Ovary (tissue), 10 donors: ENCODE measurements at regions of chr5 and their contacts with region 1.

Region 1: GRCh38 chr5:7754992-7755596 is 95.8 kb downstream of the CFAP90 start:
- DNase-seq: peak; percentile 28 to 71 (median 62)
- H3K4me3 ChIP-seq: no peak overlapping the region
- H3K27ac ChIP-seq: no peak overlapping the region
- H3K4me1 ChIP-seq: no peaks in the 10 kb centered on the region
- H3K27me3 ChIP-seq: no peaks in the 10 kb centered on the region
- CTCF ChIP-seq: peak; percentile 27 to 47 (median 41)
- EP300 ChIP-seq: no peak
- POLR2A ChIP-seq: no peak

Region 2: DNA sequence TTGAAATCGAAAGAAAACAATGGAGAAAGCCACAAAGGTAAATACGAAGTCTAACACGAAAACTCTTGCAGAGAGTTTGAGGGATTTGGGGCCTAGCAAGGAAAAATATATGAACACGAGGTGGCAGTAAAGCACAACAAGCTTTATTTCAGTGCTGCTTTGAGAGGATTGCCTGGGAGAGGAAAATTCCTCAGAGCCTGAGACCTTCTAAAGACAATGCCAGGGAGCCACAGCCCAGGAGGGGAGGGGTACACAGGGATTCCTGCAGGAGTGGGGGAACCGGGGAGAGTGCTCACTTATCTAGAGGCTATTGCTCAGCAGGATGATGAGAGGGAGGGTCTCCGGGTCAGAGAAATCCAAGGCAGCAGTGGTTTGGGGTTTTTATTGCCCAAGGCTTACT is 494.0 kb before region 1 on chr5:
- intact Hi-C with region 1: loop called in 1 of 4 experiments (anchors 10 kb)
- DNase-seq: no peak
- H3K4me3 ChIP-seq: no peak overlapping the region
- H3K27ac ChIP-seq: no peak overlapping the region
- H3K4me1 ChIP-seq: no peaks in the 10 kb centered on the region
- H3K27me3 ChIP-seq: no peaks in the 10 kb centered on the region
- CTCF ChIP-seq: no peak
- EP300 ChIP-seq: no peak
- POLR2A ChIP-seq: no peak

Region 3: DNA sequence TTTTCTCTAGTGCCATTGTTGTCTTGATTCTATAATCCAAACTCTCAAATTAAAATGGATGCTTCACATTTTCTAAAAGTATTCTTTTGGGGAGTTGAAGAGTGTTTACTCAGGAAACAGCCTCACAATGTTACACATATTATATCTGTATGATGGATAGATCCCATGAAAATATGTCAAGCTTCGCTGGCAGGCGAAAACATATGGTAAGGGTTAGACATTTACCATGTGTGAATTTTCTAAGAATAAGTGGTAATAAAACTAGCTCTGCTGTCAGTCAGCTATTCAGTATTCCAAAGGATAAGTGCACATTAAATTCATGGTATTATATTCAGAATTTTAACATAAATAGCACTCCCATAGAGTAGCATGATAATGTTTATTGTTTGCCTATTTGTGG is 372.5 kb before region 1 on chr5:
- intact Hi-C with region 1: loop called in 1 of 4 experiments (anchors 10 kb)
- DNase-seq: no peak
- H3K4me3 ChIP-seq: no peak overlapping the region
- H3K27ac ChIP-seq: no peak overlapping the region
- H3K4me1 ChIP-seq: no peaks in the 10 kb centered on the region
- H3K27me3 ChIP-seq: no peaks in the 10 kb centered on the region
- CTCF ChIP-seq: no peak
- EP300 ChIP-seq: no peak
- POLR2A ChIP-seq: no peak

Region 4: DNA sequence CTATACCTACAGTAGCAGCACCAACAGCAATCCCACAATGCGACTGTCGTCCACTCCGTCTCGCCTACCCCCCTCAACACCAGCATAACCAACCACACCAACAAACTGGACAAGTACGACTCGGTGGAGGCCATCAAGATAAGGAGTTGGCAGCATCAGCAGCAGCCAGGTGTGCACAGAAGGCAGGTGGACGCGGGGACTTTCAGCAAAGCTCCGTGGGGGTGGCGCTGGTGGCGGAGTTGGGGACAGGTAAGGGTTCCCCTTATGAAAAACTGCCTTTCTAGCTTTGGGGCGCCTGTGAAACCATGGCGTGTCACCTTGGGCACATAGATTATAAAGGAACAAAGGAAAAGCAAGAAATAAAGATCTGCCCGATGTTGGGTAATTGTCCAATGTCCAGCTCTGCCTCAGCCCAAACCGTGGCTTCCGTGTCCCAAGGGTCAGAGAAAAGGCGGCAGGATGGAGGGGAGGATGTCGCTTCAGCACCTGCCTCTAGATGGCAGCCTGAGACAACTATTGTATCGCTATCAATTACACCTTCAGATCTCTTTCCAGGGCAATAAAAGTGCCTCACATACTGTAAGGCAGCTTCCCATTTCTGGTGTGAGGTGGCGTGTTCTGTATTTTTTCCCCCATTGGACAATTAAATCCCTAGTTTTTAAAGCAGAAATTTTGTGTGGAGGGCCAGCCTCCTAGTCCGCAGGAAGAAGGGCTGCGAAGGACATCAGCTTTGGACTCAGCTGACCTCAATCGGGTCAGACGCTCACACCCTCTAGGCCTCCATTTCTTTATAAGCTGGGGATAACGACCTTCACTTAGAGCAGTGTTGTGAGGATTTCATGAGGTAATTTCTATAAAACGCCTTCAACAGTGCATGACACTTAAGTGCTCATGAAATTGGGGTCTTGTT is 172.6 kb after region 1 on chr5:
- intact Hi-C with region 1: no loop called
- DNase-seq: peak; percentile 20 to 67 (median 62)
- H3K4me3 ChIP-seq: no peak overlapping the region
- H3K27ac ChIP-seq: no peak overlapping the region
- H3K4me1 ChIP-seq: no peaks in the 10 kb centered on the region
- H3K27me3 ChIP-seq: no peaks in the 10 kb centered on the region
- CTCF ChIP-seq: peak; percentile 52 to 64 (median 59)
- EP300 ChIP-seq: no peak
- POLR2A ChIP-seq: no peak